ENCODE measurements at regions of chr10 and their contacts with region 1.

Region 1: GRCh38 chr10:89327784-89328441 is at the start of gene IFIT3:
- DNase-seq: peak; percentile 32 to 84
- ATAC-seq: peak; percentile 91 to 96 (median 94)
- H3K4me3 ChIP-seq: peak within 1 kb of the TSS; percentile 4 to 60 (median 50)
- H3K27ac ChIP-seq: peak within 1 kb of the TSS; percentile 71 to 96 (median 90)
- H3K4me1 ChIP-seq: peaks cover 4 to 72% (median 50%) of the 10 kb centered on the region in 9 donors
- H3K27me3 ChIP-seq: no peaks in the 10 kb centered on the region
- CTCF ChIP-seq: peak in 1 of 9 donors; percentile 10
- total RNA-seq, gene IFIT3: 8.0 to 102 (median 13.2) TPM

Region 2: DNA sequence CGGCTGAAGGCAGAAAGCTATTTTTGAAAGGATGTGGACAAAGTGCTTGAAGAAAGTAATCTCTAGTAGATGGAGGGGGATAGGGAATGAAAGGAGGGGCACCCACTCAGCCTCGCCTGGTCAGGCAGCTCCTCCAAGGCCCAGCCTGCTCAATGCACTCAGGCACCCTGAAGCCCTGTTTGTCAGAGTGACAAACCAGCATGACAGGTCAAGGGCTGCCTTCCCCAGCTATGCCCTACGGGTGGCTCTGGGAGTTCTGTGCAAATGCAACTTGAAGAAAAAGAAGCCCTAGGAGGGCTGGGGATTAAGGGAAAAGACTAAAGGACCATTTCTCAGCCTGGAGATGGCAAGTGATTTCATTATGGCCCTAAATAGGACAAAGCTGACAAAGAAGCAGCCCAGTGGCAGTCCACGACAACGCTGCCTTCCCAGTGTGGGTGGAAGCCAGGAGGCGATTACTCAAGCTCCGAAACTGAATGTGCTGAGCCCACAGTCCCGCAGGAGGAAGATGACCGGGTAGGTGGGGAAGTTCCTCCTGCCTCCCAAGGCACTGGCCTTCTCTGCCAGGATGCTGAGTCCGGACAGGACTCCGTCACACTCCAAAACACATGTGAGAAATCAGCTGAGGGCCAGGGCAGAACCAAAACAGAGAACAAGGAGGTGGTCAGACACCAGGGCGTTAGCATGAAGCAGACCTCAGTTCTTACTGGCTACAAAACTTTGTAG is 92.7 kb before region 1 on chr10:
- intact Hi-C with region 1: no loop called
- DNase-seq: peak; percentile 45 to 57
- ATAC-seq: peak; percentile 45 to 83 (median 73)
- H3K4me3 ChIP-seq: no peak overlapping the region
- H3K27ac ChIP-seq: peak overlapping the region in 3 of 10 donors; percentile 7 to 75 (median 36)
- H3K4me1 ChIP-seq: peaks cover 0 to 35% (median 0%) of the 10 kb centered on the region in 9 donors
- H3K27me3 ChIP-seq: no peaks in the 10 kb centered on the region
- CTCF ChIP-seq: no peak

Region 3: DNA sequence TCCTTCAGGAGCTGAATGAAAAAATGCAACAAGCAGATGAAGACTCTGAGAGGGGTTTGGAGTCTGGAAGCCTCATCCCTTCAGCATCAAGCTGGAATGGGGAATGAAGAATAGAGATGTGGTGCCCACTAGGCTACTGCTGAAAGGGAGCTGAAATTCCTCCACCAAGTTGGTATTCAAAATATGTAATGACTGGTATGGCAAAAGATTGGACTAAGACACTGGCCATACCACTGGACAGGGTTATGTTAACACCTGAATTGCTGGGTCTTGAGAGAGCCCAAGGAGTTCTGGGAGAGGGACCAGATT is 20.7 kb before region 1 on chr10:
- intact Hi-C with region 1: loop called in 1 of 10 experiments (anchors 2 kb)
- DNase-seq: no peak
- ATAC-seq: no peak
- H3K4me3 ChIP-seq: no peak overlapping the region
- H3K27ac ChIP-seq: no peak overlapping the region
- H3K4me1 ChIP-seq: peaks cover 0 to 41% (median 21%) of the 10 kb centered on the region in 9 donors
- H3K27me3 ChIP-seq: no peaks in the 10 kb centered on the region
- CTCF ChIP-seq: no peak

Region 4: GRCh38 chr10:89346264-89347254 is 18.6 kb after region 1 on chr10:
- intact Hi-C with region 1: loop called in 1 of 10 experiments (anchors 2 kb)
- DNase-seq: no peak
- ATAC-seq: peak in 7 of 8 donors; percentile 21 to 76 (median 64)
- H3K4me3 ChIP-seq: no peak overlapping the region
- H3K27ac ChIP-seq: peak overlapping the region in 9 of 10 donors; percentile 47 to 89 (median 76)
- H3K4me1 ChIP-seq: peaks cover 18 to 80% (median 64%) of the 10 kb centered on the region in 9 donors
- H3K27me3 ChIP-seq: no peaks in the 10 kb centered on the region
- CTCF ChIP-seq: no peak